PC-3 (cell line): ENCODE measurements at regions of chr4 and their contacts with region 1.

Region 1: DNA sequence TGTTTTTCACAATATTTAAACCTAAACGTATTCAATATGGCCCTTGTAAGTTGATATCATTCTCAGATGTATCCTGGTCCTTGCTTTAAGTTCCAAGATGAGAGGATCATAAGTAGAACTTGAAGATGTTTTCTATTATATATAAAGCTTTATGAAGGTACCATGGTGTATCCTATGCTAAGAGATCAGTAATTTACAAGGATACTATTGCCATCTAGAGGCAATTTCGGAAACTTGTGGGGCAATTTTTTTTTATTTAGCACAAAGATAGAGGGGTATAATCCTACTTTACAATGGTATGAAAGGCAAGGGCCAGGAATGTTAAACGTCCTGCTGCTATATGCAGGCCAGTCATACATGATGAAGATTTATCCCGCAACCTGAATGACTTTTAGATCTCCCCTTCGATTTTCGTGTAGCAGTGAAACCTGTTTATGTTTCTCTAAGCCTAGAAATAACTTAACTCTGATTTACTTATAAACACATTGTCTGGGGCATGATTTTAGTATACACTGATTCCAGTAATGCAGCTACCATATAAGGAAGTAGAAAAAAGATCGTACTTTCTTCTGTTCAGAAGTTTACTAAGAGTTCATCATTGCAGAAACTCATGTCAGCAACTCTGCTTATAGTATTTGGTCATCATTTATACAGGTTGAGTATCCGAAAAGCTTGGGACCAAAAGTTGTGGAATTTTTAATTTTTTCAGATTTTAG is 2.6 kb downstream of the SLC25A31 start:
- DNase-seq: peak; percentile 77
- ATAC-seq: peak; percentile 68
- H3K4me3 ChIP-seq: no peak overlapping the region
- H3K27ac ChIP-seq: no peak overlapping the region
- H3K4me1 ChIP-seq: no peaks in the 10 kb centered on the region
- H3K27me3 ChIP-seq: no peaks in the 10 kb centered on the region
- CTCF ChIP-seq: peak; percentile 73

Region 2: GRCh38 chr4:127604949-127605709 is 127.6 kb before region 1 on chr4:
- CTCF ChIA-PET with region 1: interaction called, 7 read pairs
- POLR2A ChIA-PET with region 1: no interaction called
- intact Hi-C with region 1: loop called (anchors 1 kb)
- DNase-seq: peak; percentile 51
- ATAC-seq: 0 out of 2 replicates have a peak, but pooled peaks have one; percentile 31
- H3K4me3 ChIP-seq: no peak overlapping the region
- H3K27ac ChIP-seq: no peak overlapping the region
- H3K4me1 ChIP-seq: no peaks in the 10 kb centered on the region
- H3K27me3 ChIP-seq: no peaks in the 10 kb centered on the region
- CTCF ChIP-seq: peak; percentile 60